ENCODE measurements at regions of chr20 and their contacts with region 1.

Region 1: GRCh38 chr20:2101865-2102584 is 398 bp downstream of the STK35 start:
- DNase-seq: peak; percentile 90 to 94 (median 91)
- H3K4me3 ChIP-seq: peak overlapping the region; percentile 83
- H3K27ac ChIP-seq: peak overlapping the region; percentile 98 to 100
- H3K4me1 ChIP-seq: peaks cover 6% of the 10 kb centered on the region
- H3K27me3 ChIP-seq: no peaks in the 10 kb centered on the region
- CTCF ChIP-seq: peak in 1 of 3 donors; percentile 54
- EP300 ChIP-seq: no peak
- POLR2A ChIP-seq: peak; percentile 42

Region 2: DNA sequence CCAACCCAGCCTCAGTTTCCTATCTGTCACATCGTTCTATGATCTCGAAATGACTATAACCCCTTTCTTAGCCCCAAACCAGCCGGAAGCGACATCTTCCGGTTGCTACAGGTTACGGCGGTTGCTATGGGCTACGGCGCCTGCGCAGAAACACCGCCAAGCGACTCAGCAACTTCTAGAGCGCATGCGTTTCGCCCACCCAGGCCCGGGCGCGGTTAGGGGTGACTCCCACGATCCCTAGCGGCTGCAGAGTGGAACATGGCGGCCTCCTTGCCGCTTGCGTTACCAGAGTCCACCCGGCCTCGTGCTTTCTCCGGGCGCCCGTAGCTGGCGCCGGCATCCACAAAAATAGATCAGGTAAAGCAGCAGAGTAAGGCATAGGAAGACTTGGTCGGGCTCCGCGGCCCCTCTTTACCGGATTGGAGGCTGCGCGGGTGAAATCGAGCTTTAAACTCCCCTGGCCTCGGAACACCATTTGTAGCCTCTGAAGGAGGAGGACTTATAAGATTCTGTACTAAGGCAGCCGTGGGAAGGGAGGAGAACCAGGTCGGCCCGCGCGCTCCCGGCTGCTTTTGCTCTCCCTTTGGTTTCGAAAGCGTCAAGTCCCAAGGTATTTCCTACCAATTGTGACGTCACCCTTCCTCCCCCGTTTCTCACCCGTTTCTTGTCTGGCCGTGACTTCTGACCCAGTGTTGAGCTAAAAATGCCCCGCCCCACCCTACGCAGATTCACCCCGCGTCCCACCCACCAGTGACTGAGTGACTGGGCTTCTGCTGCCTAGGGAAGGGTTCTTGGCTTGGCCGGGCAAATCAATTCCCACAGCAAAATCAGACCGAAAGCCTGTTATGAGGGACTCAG is 776.6 kb before region 1 on chr20:
- intact Hi-C with region 1: loop called in 1 of 4 experiments (anchors 10 kb)
- DNase-seq: peak; percentile 98 to 99 (median 99)
- H3K4me3 ChIP-seq: peak overlapping the region; percentile 76
- H3K27ac ChIP-seq: peak overlapping the region; percentile 92 to 97
- H3K4me1 ChIP-seq: peaks cover 26% of the 10 kb centered on the region
- H3K27me3 ChIP-seq: no peaks in the 10 kb centered on the region
- CTCF ChIP-seq: peak in 2 of 3 donors; percentile 44 to 72
- EP300 ChIP-seq: peak; percentile 27
- POLR2A ChIP-seq: peak; percentile 95

Region 3: GRCh38 chr20:3222635-3223600 is 1120.9 kb after region 1 on chr20:
- intact Hi-C with region 1: no loop called
- DNase-seq: no peak
- H3K4me3 ChIP-seq: no peak overlapping the region
- H3K27ac ChIP-seq: no peak overlapping the region
- H3K4me1 ChIP-seq: peaks cover 4% of the 10 kb centered on the region
- H3K27me3 ChIP-seq: no peaks in the 10 kb centered on the region
- CTCF ChIP-seq: no peak
- EP300 ChIP-seq: no peak
- POLR2A ChIP-seq: no peak

Measured in ovary (tissue), 10 donors.